BJ (cell line): ENCODE measurements at regions of chr21 and their contacts with region 1.

Region 1: DNA sequence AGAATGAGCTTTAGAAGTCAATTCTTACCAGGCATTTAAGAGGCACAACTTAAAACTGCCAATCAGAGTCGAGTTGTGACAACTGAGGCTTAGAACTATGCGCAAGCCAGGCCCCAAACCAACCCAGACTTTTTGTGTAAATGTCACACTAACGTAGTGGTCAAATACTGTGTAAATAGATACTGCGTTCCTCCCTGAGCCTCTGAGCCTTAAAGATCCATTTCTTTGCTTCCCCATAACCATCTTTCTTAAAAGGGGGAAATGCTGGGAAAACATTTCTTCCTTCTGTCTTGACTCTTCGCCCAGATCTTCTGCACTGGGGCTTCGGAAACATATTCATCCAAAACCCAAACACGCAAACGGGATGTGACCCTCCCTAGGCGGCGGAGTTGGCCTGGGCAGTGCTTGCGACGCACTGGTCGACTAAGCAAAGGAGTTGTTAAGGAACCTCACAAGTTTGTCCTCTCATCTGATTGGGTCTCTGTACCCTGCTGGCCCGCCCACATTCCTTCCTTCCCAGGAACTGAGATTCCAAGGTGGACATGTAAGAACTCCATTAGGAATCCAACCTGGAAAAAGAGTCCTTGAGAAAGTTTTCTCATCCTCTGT is 2.6 kb downstream of the ADAMTS5 start:
- DNase-seq: no peak
- H3K4me3 ChIP-seq: peak overlapping the region; percentile 51
- H3K27me3 ChIP-seq: no peaks in the 10 kb centered on the region
- CTCF ChIP-seq: no peak

Region 2: GRCh38 chr21:26892151-26892550 is 72.1 kb before region 1 on chr21:
- CTCF ChIA-PET with region 1: no interaction called
- POLR2A ChIA-PET with region 1: no interaction called
- DNase-seq: no peak
- H3K4me3 ChIP-seq: no peak overlapping the region
- H3K27me3 ChIP-seq: no peaks in the 10 kb centered on the region
- CTCF ChIP-seq: no peak

Region 3: GRCh38 chr21:27225151-27225550 is 260.9 kb after region 1 on chr21:
- CTCF ChIA-PET with region 1: no interaction called
- POLR2A ChIA-PET with region 1: interaction called, 15 read pairs
- DNase-seq: no peak
- H3K4me3 ChIP-seq: no peak overlapping the region
- H3K27me3 ChIP-seq: no peaks in the 10 kb centered on the region
- CTCF ChIP-seq: no peak

Region 4: DNA sequence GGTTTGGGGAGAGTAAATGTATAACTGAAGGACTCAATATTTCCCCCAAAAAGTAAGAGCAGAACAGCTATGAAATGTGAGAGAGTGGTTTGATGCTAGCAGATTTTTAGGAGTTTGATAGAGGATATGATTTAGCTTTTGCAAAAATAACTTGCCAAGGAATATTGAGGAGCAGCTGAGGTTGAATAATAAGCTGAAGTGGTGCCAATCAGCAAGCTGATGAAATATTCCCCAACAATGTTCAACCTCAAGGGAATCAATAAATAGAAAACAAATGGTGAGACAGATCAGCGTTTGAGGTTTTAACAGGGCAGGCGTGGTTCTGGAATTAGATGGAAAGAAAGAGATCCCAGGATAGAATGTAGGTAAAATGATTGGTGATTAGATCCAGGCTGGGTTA is 416.0 kb after region 1 on chr21:
- CTCF ChIA-PET with region 1: no interaction called
- POLR2A ChIA-PET with region 1: no interaction called
- DNase-seq: no peak
- H3K4me3 ChIP-seq: no peak overlapping the region
- H3K27me3 ChIP-seq: no peaks in the 10 kb centered on the region
- CTCF ChIP-seq: no peak